T-cell (primary cell): ENCODE measurements at regions of chr5 and their contacts with region 1.

Region 1: GRCh38 chr5:119411935-119412602 is 40.2 kb upstream of the HSD17B4 start:
- DNase-seq: peak in 32 of 35 experiments; percentile 12 to 87 (median 40)
- ATAC-seq: peak; percentile 81 to 90 (median 84)
- H3K4me3 ChIP-seq: peak overlapping the region; percentile 48 to 88
- H3K4me3 Mint-ChIP-seq: peak overlapping the region; percentile 79 to 85 (median 84)
- H3K27ac ChIP-seq: no peak overlapping the region
- H3K27ac Mint-ChIP-seq: peak overlapping the region; percentile 75 to 80
- H3K4me1 ChIP-seq: peaks cover 7 to 8% of the 10 kb centered on the region in 2 experiments
- H3K4me1 Mint-ChIP-seq: peaks cover 14 to 23% (median 20%) of the 10 kb centered on the region in 3 donors
- H3K27me3 ChIP-seq: peaks cover 0 to 2% of the 10 kb centered on the region in 2 experiments
- H3K27me3 Mint-ChIP-seq: no peaks in the 10 kb centered on the region

Region 2: GRCh38 chr5:119022017-119022745 is 389.9 kb before region 1 on chr5:
- CTCF ChIA-PET with region 1: interaction called, 7 to 29 read pairs
- POLR2A ChIA-PET with region 1: no interaction called
- DNase-seq: peak in 1 of 35 experiments; percentile 56
- ATAC-seq: peak; percentile 31 to 55 (median 48)
- H3K4me3 ChIP-seq: no peak overlapping the region
- H3K4me3 Mint-ChIP-seq: no peak overlapping the region
- H3K27ac ChIP-seq: no peak overlapping the region
- H3K27ac Mint-ChIP-seq: peak overlapping the region in 1 of 2 donors; percentile 59
- H3K4me1 ChIP-seq: no peaks in the 10 kb centered on the region
- H3K4me1 Mint-ChIP-seq: peaks cover 5 to 7% (median 5%) of the 10 kb centered on the region in 3 donors
- H3K27me3 ChIP-seq: no peaks in the 10 kb centered on the region
- H3K27me3 Mint-ChIP-seq: no peaks in the 10 kb centered on the region

Region 3: DNA sequence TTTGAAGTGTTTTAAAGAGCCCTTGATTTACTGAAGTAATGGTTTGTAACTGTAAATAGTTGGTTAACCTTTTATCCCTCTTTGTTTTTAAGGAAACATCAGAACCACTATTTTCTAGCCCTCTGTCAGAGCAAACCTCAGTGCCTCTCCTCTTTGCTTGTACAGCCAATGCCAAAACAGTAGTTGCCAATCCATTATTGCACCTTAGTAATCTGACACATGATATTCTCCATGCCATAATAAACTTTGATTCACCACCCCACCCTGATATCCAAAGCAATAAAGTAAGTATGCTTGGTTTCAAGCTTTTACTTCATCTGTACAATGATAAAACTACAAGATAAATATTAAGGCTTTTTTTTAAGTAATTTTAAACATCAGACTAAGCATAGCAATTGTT is 240.4 kb before region 1 on chr5:
- CTCF ChIA-PET with region 1: no interaction called
- POLR2A ChIA-PET with region 1: no interaction called
- DNase-seq: no peak
- ATAC-seq: no peak
- H3K4me3 ChIP-seq: no peak overlapping the region
- H3K4me3 Mint-ChIP-seq: no peak overlapping the region
- H3K27ac ChIP-seq: no peak overlapping the region
- H3K27ac Mint-ChIP-seq: no peak overlapping the region
- H3K4me1 ChIP-seq: no peaks in the 10 kb centered on the region
- H3K4me1 Mint-ChIP-seq: peaks cover 10 to 17% (median 10%) of the 10 kb centered on the region in 3 donors
- H3K27me3 ChIP-seq: no peaks in the 10 kb centered on the region
- H3K27me3 Mint-ChIP-seq: no peaks in the 10 kb centered on the region

Region 4: GRCh38 chr5:119267958-119268386 is 144.1 kb before region 1 on chr5:
- CTCF ChIA-PET with region 1: interaction called, 5 to 13 read pairs
- POLR2A ChIA-PET with region 1: interaction called in 1 of 2 experiments, 3 read pairs
- DNase-seq: peak; percentile 55 to 93 (median 81)
- ATAC-seq: peak; percentile 55 to 73 (median 60)
- H3K4me3 ChIP-seq: peak overlapping the region; percentile 87 to 98
- H3K4me3 Mint-ChIP-seq: peak overlapping the region; percentile 98 to 100 (median 100)
- H3K27ac ChIP-seq: peak overlapping the region; percentile 86
- H3K27ac Mint-ChIP-seq: peak overlapping the region; percentile 97 to 99
- H3K4me1 ChIP-seq: peaks cover 28 to 29% of the 10 kb centered on the region in 2 experiments
- H3K4me1 Mint-ChIP-seq: peaks cover 55 to 75% (median 61%) of the 10 kb centered on the region in 3 donors
- H3K27me3 ChIP-seq: no peaks in the 10 kb centered on the region
- H3K27me3 Mint-ChIP-seq: no peaks in the 10 kb centered on the region

Region 5: GRCh38 chr5:119315516-119315949 is 96.5 kb before region 1 on chr5:
- CTCF ChIA-PET with region 1: interaction called, 21 to 47 read pairs
- POLR2A ChIA-PET with region 1: interaction called in 1 of 2 experiments, 4 read pairs
- DNase-seq: peak in 32 of 35 experiments; percentile 34 to 79 (median 58)
- ATAC-seq: peak; percentile 77 to 88 (median 84)
- H3K4me3 ChIP-seq: no peak overlapping the region
- H3K4me3 Mint-ChIP-seq: peak overlapping the region in 2 of 3 donors; percentile 3 to 52
- H3K27ac ChIP-seq: peak overlapping the region; percentile 60
- H3K27ac Mint-ChIP-seq: peak overlapping the region; percentile 82 to 85
- H3K4me1 ChIP-seq: peaks cover 80 to 87% of the 10 kb centered on the region in 2 experiments
- H3K4me1 Mint-ChIP-seq: peaks cover 93 to 94% (median 94%) of the 10 kb centered on the region in 3 donors
- H3K27me3 ChIP-seq: no peaks in the 10 kb centered on the region
- H3K27me3 Mint-ChIP-seq: no peaks in the 10 kb centered on the region

Region 6: GRCh38 chr5:119435436-119436132 is 23.5 kb after region 1 on chr5:
- CTCF ChIA-PET with region 1: interaction called, 7 to 12 read pairs
- POLR2A ChIA-PET with region 1: no interaction called
- DNase-seq: peak; percentile 37 to 79 (median 68)
- ATAC-seq: peak; percentile 76 to 81 (median 79)
- H3K4me3 ChIP-seq: no peak overlapping the region
- H3K4me3 Mint-ChIP-seq: no peak overlapping the region
- H3K27ac ChIP-seq: no peak overlapping the region
- H3K27ac Mint-ChIP-seq: no peak overlapping the region
- H3K4me1 ChIP-seq: peaks cover 0 to 4% of the 10 kb centered on the region in 2 experiments
- H3K4me1 Mint-ChIP-seq: peaks cover 7 to 17% (median 9%) of the 10 kb centered on the region in 3 donors
- H3K27me3 ChIP-seq: peaks cover 0 to 22% of the 10 kb centered on the region in 2 experiments
- H3K27me3 Mint-ChIP-seq: peaks cover 16 to 39% of the 10 kb centered on the region in 2 donors

Region 7: DNA sequence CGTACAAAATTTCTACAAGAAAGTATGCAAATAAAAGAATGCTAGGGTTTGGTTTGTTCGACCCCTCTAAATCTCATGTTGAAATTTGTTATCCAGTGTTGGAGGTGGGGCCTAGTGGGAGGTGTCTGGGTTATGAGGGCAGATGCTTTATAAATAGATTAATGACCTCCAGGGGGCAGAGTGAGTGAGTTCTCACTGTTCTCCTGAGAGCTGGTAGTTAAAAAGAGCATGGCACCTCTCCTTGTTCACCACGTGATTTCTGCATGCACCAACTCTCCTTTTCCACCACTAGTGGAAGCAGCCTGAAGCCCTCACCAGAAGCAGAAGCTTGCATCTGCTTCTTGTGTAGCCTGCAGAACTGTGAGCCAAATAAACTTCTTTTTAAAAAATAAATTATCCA is 166.9 kb after region 1 on chr5:
- CTCF ChIA-PET with region 1: no interaction called
- POLR2A ChIA-PET with region 1: no interaction called
- DNase-seq: peak in 1 of 35 experiments; percentile 1
- ATAC-seq: no peak
- H3K4me3 ChIP-seq: no peak overlapping the region
- H3K4me3 Mint-ChIP-seq: no peak overlapping the region
- H3K27ac ChIP-seq: no peak overlapping the region
- H3K27ac Mint-ChIP-seq: no peak overlapping the region
- H3K4me1 ChIP-seq: no peaks in the 10 kb centered on the region
- H3K4me1 Mint-ChIP-seq: no peaks in the 10 kb centered on the region
- H3K27me3 ChIP-seq: no peaks in the 10 kb centered on the region
- H3K27me3 Mint-ChIP-seq: peaks cover 0 to 2% of the 10 kb centered on the region in 2 donors